Right ventricle myocardium inferior (tissue), 1 donor: ENCODE measurements at regions of chr6 and their contacts with region 1.

Region 1: DNA sequence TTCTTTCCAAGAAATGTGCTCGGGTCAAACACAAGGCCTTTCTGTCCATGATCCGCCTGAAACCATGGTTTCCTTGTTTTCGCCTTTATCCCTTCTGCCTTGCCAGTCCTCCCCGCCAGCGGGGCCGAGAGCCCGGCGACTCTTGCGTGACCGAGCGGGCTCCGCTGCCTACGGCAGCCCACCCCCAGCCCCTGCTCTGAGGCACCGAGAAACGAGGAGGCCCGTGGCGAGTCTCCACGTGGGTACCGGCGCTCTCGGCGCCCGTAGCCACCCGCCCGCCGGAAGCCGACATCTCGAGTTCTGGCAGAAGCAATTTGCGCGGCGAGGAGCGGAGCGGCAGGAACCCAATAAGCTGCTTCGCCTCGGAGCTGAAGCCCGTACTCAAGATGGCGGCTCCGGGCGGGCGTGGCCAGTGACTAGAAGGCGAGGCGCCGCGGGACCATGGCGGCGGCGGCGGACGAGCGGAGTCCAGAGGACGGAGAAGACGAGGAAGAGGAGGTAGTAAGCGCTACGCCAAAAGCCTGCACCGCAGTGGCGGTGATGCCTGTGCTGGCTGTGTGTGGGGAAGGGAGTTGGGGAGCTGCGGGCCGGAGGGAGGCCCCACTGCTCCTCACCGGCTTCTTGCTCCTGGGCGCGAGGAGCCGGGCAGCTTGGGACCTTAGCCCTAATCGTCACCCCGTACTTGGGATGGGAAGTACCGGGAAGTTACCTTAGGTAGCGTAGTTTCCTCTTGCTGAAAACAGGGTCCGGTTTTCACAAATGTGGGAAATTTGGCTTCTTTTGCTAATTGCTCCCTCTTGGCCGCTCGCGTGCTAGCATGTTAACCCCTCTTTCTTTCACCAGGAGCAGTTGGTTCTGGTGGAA is at the start of gene GTF3C6:
- DNase-seq: peak; percentile 99
- ATAC-seq: peak; percentile 99
- total RNA-seq, gene GTF3C6: 129 TPM

Region 2: DNA sequence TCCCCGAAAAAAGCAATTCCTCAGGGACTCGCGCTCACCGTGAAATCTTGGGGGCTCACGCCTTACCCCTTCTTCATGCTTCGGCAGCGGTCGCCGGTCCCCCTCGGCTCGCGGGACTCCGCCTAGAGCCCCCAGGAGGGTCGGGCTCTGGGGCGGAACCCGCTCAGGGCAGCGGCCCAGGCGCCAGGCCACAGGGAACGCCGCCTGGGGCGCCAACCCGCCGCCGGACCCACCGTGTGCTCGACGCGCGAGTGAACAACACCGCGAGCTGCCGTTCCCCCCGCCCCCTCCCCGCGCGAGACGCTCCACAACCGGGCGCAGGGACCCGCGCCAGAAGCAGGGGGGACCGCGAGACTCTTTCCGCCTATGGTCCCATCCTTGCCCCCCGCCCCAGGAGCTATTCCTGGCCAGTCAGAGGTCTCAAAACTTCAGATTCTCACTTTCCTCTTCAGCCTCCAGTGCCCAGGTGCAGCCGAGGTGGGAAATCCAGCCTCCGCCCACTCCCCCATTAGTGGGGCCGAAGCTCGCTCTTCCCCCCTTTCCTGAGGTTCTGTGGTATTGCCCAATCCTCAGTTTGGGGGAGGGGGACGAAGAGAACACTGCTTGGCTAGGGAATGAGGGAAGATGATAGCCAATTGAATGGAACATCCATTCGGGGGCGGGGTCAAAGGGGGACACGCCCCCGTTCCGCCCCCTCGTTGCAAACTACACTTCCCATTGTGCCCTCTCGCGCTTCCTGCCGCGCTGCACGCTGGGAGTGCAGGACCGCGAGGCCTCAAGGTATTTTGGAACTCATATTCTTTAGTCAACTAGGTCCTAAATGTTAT is 778.9 kb before region 1 on chr6 and contains the start of gene WASF1:
- intact Hi-C with region 1: loop called (anchors 10 kb)
- DNase-seq: peak; percentile 96
- ATAC-seq: peak; percentile 99
- total RNA-seq, gene WASF1: 1.8 TPM

Region 3: GRCh38 chr6:110573136-110573920 is 385.2 kb before region 1 on chr6:
- intact Hi-C with region 1: no loop called
- DNase-seq: no peak
- ATAC-seq: no peak

Region 4: GRCh38 chr6:110815217-110816109 is 143.1 kb before region 1 on chr6 and contains the start of gene CDK19:
- intact Hi-C with region 1: loop called (anchors 1 kb)
- DNase-seq: peak; percentile 100
- ATAC-seq: peak; percentile 98
- total RNA-seq, gene CDK19: 11.5 TPM

Region 5: GRCh38 chr6:110873981-110874879 is 84.3 kb before region 1 on chr6 and contains the start of gene AMD1:
- intact Hi-C with region 1: loop called (anchors 2 kb)
- DNase-seq: peak; percentile 99
- ATAC-seq: peak; percentile 91
- total RNA-seq, gene AMD1: 84.9 TPM